Activated T-helper 1 cell treated with anti-CD3 and anti-CD28 coated beads, Interleukin-12 subunit alpha, Interleukin-12 subunit beta, Interleukin-2, Interleukin-4 antibody, amounts not matched to agents 30 ng/mL and 10 ng/mL and 1 ng/mL, durations not matched to agents 14 hours and 24 hours and 36 hours (primary cell): ENCODE measurements at regions of chr10 and their contacts with region 1.

Region 1: GRCh38 chr10:92689663-92690210 is at the start of gene HHEX:
- DNase-seq: no peak
- H3K4me3 Mint-ChIP-seq: peak within 1 kb of the TSS; percentile 73
- H3K27ac Mint-ChIP-seq: peak within 1 kb of the TSS; percentile 55
- H3K4me1 Mint-ChIP-seq: peaks cover 23% of the 10 kb centered on the region
- H3K27me3 Mint-ChIP-seq: peaks cover 82% of the 10 kb centered on the region
- total RNA-seq, gene HHEX: 0.16 and 0.32 TPM in 2 replicates

Region 2: GRCh38 chr10:92667078-92667477 is 22.7 kb before region 1 on chr10:
- intact Hi-C with region 1: no loop called
- DNase-seq: no peak
- H3K4me3 Mint-ChIP-seq: no peak overlapping the region
- H3K27ac Mint-ChIP-seq: no peak overlapping the region
- H3K4me1 Mint-ChIP-seq: no peaks in the 10 kb centered on the region
- H3K27me3 Mint-ChIP-seq: peaks cover 8% of the 10 kb centered on the region

Region 3: GRCh38 chr10:92699518-92700381 is 10.0 kb after region 1 on chr10:
- intact Hi-C with region 1: loop called (anchors 1 kb)
- DNase-seq: no peak
- H3K4me3 Mint-ChIP-seq: peak overlapping the region; percentile 80
- H3K27ac Mint-ChIP-seq: no peak overlapping the region
- H3K4me1 Mint-ChIP-seq: peaks cover 19% of the 10 kb centered on the region
- H3K27me3 Mint-ChIP-seq: peaks cover 65% of the 10 kb centered on the region

Region 4: GRCh38 chr10:92880233-92880861 is 190.6 kb after region 1 on chr10:
- intact Hi-C with region 1: loop called (anchors 10 kb)
- DNase-seq: no peak
- H3K4me3 Mint-ChIP-seq: no peak overlapping the region
- H3K27ac Mint-ChIP-seq: no peak overlapping the region
- H3K4me1 Mint-ChIP-seq: peaks cover 18% of the 10 kb centered on the region
- H3K27me3 Mint-ChIP-seq: peaks cover 3% of the 10 kb centered on the region

Region 5: DNA sequence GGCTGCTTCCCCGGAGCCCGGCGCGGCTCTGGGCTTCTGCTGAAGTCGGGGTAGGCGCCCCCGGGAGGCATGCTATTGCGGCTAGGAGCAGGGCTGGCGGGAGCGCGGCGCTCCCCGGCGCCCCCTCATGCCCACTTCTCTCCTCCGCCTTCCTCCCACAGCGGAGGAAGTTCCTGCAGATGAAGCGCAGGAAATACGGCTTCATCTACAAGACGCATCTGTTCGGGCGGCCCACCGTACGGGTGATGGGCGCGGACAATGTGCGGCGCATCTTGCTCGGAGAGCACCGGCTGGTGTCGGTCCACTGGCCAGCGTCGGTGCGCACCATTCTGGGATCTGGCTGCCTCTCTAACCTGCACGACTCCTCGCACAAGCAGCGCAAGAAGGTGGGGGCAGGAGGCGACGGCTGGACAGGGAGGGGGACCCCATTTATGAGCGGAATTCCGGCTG is 384.4 kb after region 1 on chr10:
- intact Hi-C with region 1: loop called (anchors 2 kb)
- DNase-seq: no peak
- H3K4me3 Mint-ChIP-seq: peak overlapping the region; percentile 39
- H3K27ac Mint-ChIP-seq: no peak overlapping the region
- H3K4me1 Mint-ChIP-seq: peaks cover 16% of the 10 kb centered on the region
- H3K27me3 Mint-ChIP-seq: peaks cover 79% of the 10 kb centered on the region

Region 6: DNA sequence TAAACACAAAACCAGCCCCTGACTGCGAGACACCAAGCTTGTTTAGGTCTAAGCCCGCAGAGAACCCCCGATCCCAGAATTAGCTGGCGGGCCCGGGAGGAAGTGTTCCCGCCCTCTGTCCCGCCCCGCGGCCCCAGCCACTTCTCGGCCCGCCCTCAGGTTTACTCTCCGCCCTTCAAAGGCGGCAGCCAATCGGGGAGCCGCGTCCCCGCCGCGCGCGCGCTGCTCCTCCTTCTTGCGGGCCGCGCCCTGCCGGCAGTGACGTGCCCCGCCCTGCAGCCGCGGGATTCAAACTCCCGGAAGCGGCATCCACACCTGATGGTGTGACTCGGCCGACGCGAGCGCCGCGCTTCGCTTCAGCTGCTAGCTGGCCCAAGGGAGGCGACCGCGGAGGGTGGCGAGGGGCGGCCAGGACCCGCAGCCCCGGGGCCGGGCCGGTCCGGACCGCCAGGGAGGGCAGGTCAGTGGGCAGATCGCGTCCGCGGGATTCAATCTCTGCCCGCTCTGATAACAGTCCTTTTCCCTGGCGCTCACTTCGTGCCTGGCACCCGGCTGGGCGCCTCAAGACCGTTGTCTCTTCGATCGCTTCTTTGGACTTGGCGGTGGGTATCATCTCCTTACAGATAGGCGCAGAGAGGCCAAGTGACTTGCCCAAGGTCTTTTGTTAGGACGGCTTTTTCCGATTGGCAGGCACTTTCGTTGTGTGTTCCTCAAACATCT is 806.7 kb after region 1 on chr10 and contains the start of gene CEP55:
- intact Hi-C with region 1: loop called (anchors 5 kb)
- DNase-seq: peak; percentile 96
- H3K4me3 Mint-ChIP-seq: peak within 1 kb of the TSS; percentile 88
- H3K27ac Mint-ChIP-seq: peak within 1 kb of the TSS; percentile 95
- H3K4me1 Mint-ChIP-seq: peaks cover 46% of the 10 kb centered on the region
- H3K27me3 Mint-ChIP-seq: no peaks in the 10 kb centered on the region
- total RNA-seq, gene CEP55: 53.0 and 55.7 TPM in 2 replicates